Gastrocnemius medialis (tissue), 4 donors: ENCODE measurements at regions of chr11 and their contacts with region 1.

Region 1: GRCh38 chr11:59668950-59669610 is at the start of gene PATL1:
- DNase-seq: peak; percentile 100
- ATAC-seq: peak; percentile 93 to 97
- H3K4me3 ChIP-seq: peak within 1 kb of the TSS; percentile 90 to 97 (median 96)
- H3K27ac ChIP-seq: peak within 1 kb of the TSS; percentile 95 to 99 (median 97)
- H3K4me1 ChIP-seq: peaks cover 19 to 26% of the 10 kb centered on the region in 2 donors
- H3K27me3 ChIP-seq: no peaks in the 10 kb centered on the region
- CTCF ChIP-seq: peak in 1 of 5 experiments; percentile 38
- POLR2A ChIP-seq: peak; percentile 90 to 94
- total RNA-seq, gene PATL1: 19.0 to 29.9 (median 26.2) TPM

Region 2: GRCh38 chr11:59550368-59550841 is 118.7 kb before region 1 on chr11:
- in situ Hi-C with region 1: no loop called
- intact Hi-C with region 1: loop called (anchors 2 kb)
- DNase-seq: peak; percentile 50 to 67
- ATAC-seq: peak; percentile 71 to 73
- H3K4me3 ChIP-seq: peak overlapping the region; percentile 62 to 75 (median 67)
- H3K27ac ChIP-seq: peak overlapping the region; percentile 73 to 84 (median 78)
- H3K4me1 ChIP-seq: peaks cover 4 to 10% of the 10 kb centered on the region in 2 donors
- H3K27me3 ChIP-seq: no peaks in the 10 kb centered on the region
- CTCF ChIP-seq: peak; percentile 30 to 63 (median 55)
- POLR2A ChIP-seq: no peak

Region 3: GRCh38 chr11:59802639-59803176 is 133.6 kb after region 1 on chr11:
- in situ Hi-C with region 1: no loop called
- intact Hi-C with region 1: loop called (anchors 2 kb)
- DNase-seq: peak in 1 of 2 donors; percentile 18
- ATAC-seq: peak; percentile 84 to 85
- H3K4me3 ChIP-seq: no peak overlapping the region
- H3K27ac ChIP-seq: peak overlapping the region; percentile 36 to 78 (median 64)
- H3K4me1 ChIP-seq: peaks cover 6 to 9% of the 10 kb centered on the region in 2 donors
- H3K27me3 ChIP-seq: no peaks in the 10 kb centered on the region
- CTCF ChIP-seq: peak; percentile 59 to 83 (median 64)
- POLR2A ChIP-seq: no peak